Left cardiac atrium (tissue), 4 donors: ENCODE measurements at regions of chr3 and their contacts with region 1.

Region 1: DNA sequence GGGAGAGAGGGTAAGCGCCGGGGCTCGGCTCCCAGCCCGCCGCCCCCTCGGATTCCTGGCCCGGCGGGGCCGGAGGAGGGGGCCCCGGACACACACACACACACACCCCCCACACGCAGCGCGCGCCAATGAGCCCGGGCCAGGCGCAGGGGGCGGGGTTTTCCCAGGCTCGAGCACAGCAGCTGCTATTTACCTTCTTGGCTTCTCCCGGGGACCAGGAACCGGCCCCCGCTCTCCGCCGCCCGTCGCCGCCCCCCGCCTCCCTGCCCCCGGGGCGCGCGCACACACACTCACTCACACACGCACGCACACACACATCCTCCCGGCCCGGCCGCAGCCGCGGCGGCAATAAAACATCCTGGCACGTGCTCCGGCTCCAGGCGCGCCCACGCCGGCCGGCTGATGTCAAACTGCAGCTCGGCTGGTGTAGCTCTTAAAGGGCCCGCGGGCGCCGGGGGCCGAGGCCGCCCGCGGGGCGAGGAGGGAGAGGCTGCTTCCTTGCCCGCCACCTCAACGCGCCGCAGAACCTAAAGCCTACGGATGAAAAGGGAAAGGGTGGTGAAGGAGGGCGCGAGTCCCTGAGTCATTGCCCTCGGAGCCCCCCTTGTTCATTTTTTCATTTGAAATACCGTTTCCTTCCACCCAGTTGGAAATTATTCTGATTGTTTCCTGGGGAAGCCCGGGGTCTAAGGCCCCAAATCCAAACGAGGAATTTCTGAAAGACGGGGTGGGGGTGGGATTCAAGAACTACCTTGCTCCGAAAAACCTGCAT is 1.0 kb upstream of the HES1 start:
- DNase-seq: peak; percentile 95
- ATAC-seq: peak; percentile 56 to 73

Region 2: DNA sequence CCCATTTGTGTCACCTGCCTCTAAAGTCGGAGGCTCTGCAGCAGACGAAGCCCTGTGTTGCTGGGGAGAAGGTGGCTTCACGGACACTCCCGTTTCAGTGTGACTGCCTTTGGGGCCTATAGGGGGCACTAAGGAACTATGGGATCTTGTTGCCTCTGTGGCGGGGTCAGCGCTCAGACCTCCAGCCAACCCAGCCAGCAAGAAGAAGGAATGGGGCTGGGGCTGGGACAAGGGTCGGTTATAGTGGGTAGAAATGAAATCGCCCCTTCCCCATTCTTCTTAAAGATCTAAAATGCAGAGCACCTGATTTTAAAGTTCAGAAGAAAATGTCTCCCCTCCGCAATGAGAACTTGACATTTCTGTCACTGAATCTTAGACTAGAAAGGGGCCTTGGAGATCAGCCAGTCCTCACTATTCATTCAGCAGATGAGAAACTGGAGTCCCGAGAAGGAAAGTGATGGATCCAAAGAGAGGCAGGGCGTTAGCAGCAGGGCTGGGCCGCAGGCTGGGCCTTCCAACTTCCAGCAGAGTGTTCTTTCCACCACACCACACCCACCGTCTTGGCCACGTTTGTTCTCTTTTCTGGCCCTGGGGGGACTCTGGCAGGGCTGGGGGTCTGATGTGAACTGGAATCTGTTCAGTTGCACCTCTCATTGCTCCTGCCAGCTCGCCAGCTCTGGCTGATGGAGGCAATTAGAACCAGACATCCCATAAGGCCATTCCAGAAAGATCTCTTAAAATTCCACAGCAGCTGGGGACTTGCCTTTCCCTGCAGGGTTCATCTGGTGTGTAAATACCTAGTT is 346.6 kb before region 1 on chr3:
- intact Hi-C with region 1: loop called (anchors 2 to 5 kb)
- DNase-seq: peak; percentile 67
- ATAC-seq: peak; percentile 88 to 95

Region 3: GRCh38 chr3:194003125-194004057 is 131.6 kb before region 1 on chr3:
- intact Hi-C with region 1: loop called (anchors 5 to 10 kb)
- DNase-seq: peak; percentile 93
- ATAC-seq: peak; percentile 91 to 94

Region 4: DNA sequence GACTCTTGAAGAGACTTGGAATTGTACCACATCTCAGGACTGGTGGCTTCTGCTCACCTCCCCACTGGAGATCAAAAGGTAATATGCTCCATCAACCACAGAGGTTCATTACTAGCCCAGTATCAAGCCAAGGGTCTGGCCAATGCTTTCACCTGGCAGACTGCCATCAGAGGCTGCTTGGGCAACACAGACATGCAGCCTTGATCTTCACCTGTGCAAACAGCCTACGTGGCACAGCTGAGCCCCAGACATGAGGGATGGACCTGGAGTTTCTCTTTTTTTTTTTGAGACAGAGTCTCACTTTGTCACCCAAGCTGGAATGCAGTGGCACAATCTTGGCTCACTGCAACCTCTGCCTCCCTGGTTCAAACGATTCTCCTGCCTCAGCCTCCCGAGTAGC is 104.6 kb before region 1 on chr3:
- intact Hi-C with region 1: no loop called
- DNase-seq: no peak
- ATAC-seq: no peak

Region 5: DNA sequence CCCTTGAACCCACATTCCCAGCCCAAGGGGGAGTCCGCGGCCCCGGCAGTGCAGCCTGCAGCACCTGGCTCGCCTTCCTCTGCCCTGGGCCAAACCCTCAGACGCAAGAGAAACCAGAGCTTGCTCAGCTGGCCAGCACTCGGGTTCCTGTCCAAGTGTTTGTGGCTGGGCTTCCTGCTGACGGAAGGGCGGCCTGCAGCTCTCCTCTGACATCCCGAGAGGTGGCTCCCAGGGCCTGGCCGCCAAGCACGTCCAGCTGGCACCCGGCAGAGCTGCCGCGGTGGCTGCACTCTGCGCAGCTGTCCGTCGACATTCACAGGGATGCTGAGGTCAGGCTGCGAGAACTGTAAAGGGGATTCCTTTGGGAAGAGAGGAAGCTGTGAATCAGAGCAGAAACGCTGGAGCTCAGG is 130.5 kb after region 1 on chr3:
- intact Hi-C with region 1: loop called (anchors 2 to 5 kb)
- DNase-seq: peak; percentile 94
- ATAC-seq: peak; percentile 82

Region 6: DNA sequence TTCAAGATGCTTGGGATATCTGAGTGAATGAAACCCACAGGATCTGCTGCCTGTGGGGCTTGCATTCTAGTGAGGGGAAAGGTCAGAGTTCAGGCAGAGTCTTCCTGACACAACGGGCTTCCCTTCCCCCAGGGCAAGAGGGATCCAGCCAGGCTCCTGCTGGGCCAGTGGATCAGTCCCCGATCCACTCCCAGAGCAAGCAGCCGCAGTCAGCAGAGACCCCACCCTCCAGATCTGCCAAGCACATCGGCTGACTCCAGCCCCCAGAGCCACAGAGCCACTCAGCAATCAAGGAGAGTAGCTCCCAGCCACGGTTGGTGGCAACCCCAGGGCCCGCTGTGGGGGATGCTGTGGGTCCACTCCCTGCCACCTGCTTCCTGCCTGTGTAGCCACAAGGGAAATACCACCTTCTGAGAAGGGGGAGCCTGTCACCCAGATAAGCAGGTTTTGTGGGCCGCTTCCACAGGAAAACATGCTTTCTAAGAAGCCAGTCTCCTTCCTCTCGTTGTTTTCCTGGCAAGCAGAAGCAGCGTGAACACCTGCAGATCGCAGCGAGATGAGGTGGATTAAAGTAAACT is 171.3 kb after region 1 on chr3:
- intact Hi-C with region 1: no loop called
- DNase-seq: no peak
- ATAC-seq: no peak